ENCODE measurements at regions of chr19 and their contacts with region 1.

Region 1: GRCh38 chr19:48501496-48502350 is 9.9 kb downstream of the LMTK3 start:
- DNase-seq: peak; percentile 96 to 100
- H3K4me3 ChIP-seq: peak overlapping the region; percentile 19 to 60 (median 44); a peak in 7 of 8 replicates
- H3K27ac ChIP-seq: peak overlapping the region; percentile 58; the same call in 1 of the 2 replicates
- H3K4me1 ChIP-seq: peaks cover 0 to 14% (median 12%) of the 10 kb centered on the region in 4 experiments; a peak in 6 of 7 replicates
- H3K27me3 ChIP-seq: no peaks in the 10 kb centered on the region
- CTCF ChIP-seq: no peak
- EP300 ChIP-seq: 0 out of 3 replicates have a peak, but pooled peaks of 1 of the 2 experiments have one; percentile 7
- POLR2A ChIP-seq: no peak
- RAD21 ChIP-seq: no peak

Region 2: DNA sequence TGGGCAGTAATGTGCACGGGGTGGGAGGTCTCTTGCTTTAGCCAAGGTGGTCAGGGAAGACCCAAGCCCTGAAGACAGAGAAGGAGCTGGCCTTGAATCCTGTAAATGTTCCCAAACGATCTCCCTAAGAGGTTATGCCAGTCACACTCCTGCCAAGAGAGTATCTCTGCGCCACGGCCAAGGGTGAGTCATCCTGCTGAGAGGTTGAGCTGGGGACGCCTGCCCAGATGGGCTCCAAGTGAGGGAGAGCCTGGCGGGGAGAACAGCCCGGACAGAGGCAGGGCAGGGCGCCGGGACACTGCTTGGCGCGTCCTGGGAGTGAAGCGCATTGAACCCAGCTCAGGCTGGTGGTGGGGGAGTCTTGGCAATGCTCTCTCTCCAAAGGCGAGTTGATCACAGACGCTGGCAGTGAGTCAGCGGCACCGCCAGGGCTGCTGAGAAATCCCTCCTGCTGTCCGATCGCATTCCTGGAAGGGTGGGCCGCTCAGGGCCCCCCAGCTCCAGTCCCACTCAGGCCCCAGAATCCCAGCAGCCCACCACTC is 66.7 kb after region 1 on chr19:
- CTCF ChIA-PET with region 1: interaction called, 132 read pairs
- POLR2A ChIA-PET with region 1: interaction called, 3 read pairs
- DNase-seq: peak in 1 of 2 experiments; percentile 68
- H3K4me3 ChIP-seq: peak overlapping the region in 3 of 4 experiments; percentile 10 to 50 (median 14); a peak in 4 of 8 replicates
- H3K27ac ChIP-seq: no peak overlapping the region; the same call in 1 of the 2 replicates
- H3K4me1 ChIP-seq: peaks cover 0 to 8% (median 3%) of the 10 kb centered on the region in 4 experiments; a peak in 5 of 7 replicates
- H3K27me3 ChIP-seq: no peaks in the 10 kb centered on the region; a peak in 2 of 7 replicates
- CTCF ChIP-seq: peak in 1 of 3 experiments; percentile 7; a peak in 2 of 4 replicates
- EP300 ChIP-seq: no peak
- POLR2A ChIP-seq: peak in 1 of 2 experiments; percentile 47; a peak in 1 of 3 replicates
- RAD21 ChIP-seq: no peak

Region 3: DNA sequence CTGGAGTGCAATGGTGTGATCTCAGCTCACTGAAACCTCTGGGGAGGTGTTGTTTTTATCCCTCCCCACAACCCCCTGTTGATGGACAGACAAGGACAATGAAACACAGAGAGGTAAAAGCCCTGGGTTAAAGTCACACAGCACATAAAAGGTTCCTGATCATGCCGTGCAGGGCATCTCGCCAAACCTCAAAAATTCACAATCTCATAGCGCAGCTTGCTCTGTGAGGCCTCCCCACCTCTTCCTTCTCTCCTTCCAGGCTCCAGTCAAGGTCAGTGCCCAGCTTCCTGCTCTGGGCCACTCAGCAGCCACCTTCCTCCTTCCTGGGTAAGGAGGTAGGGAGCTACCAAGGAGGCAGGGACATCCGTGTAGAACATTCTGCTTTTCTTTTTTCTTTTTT is 196.3 kb after region 1 on chr19:
- CTCF ChIA-PET with region 1: no interaction called
- POLR2A ChIA-PET with region 1: no interaction called
- DNase-seq: no peak
- H3K4me3 ChIP-seq: no peak overlapping the region
- H3K27ac ChIP-seq: no peak overlapping the region
- H3K4me1 ChIP-seq: peaks cover 0 to 5% (median 1%) of the 10 kb centered on the region in 4 experiments; a peak in 4 of 7 replicates
- H3K27me3 ChIP-seq: no peaks in the 10 kb centered on the region
- CTCF ChIP-seq: no peak
- EP300 ChIP-seq: no peak
- POLR2A ChIP-seq: no peak
- RAD21 ChIP-seq: no peak

Measured in H1 (cell line).